Caco-2 (cell line): ENCODE measurements at regions of chr2 and their contacts with region 1.

Region 1: DNA sequence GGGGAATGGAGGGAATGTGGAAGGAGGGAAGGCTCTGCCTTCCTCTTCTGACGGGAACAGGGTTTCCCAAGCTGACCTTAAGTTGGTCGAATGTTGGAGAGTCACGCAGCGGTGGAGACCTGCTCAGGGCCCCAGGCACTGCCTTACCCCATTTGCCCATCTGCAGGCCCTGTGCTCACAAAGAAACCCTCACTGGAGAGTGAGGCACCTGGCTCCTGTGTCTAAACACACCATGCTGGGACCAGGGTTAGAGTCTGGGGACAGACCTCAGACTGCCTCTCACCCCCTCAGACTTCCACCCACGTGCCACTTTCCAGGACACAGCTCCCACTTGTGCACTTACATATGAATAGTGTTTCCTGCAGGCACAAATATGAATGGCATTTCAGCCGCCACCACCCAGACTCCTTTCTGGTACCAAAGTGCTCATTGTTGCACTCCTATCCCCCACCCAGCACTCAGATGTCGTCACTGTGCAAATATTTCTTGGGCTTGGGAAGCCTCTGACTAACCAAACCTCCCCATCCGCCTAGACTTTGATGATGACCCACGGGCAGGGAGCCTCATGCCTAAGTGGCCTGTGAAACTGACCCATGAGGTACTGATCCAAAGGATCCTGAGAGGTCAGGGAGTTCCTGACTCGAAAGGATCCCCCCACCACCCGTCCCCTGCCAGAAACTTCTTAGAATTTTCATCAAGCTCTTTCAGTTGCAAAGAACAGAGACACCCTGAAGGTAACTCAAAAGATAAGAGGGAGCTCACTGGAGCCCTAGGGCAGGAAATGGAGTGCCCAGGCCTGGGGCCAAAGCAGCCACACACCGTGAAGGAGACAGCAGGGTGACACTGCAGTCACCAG is 78.3 kb downstream of the STPG4 start:
- DNase-seq: peak; percentile 91 to 95
- H3K4me3 ChIP-seq: no peak overlapping the region
- H3K4me3 Mint-ChIP-seq: peak overlapping the region; percentile 52
- H3K27ac Mint-ChIP-seq: peak overlapping the region; percentile 89
- H3K4me1 ChIP-seq: peaks cover 58% of the 10 kb centered on the region
- H3K4me1 Mint-ChIP-seq: peaks cover 73% of the 10 kb centered on the region
- H3K27me3 ChIP-seq: no peaks in the 10 kb centered on the region
- H3K27me3 Mint-ChIP-seq: no peaks in the 10 kb centered on the region
- CTCF ChIP-seq: peak in 1 of 2 experiments; percentile 13

Region 2: GRCh38 chr2:47088668-47089462 is 12.1 kb after region 1 on chr2:
- CTCF ChIA-PET with region 1: interaction called, 19 read pairs
- POLR2A ChIA-PET with region 1: interaction called, 10 read pairs
- intact Hi-C with region 1: no loop called
- DNase-seq: peak; percentile 63 to 82
- H3K4me3 ChIP-seq: no peak overlapping the region
- H3K4me3 Mint-ChIP-seq: no peak overlapping the region
- H3K27ac Mint-ChIP-seq: peak overlapping the region; percentile 63
- H3K4me1 ChIP-seq: peaks cover 35% of the 10 kb centered on the region
- H3K4me1 Mint-ChIP-seq: peaks cover 43% of the 10 kb centered on the region
- H3K27me3 ChIP-seq: no peaks in the 10 kb centered on the region
- H3K27me3 Mint-ChIP-seq: no peaks in the 10 kb centered on the region
- CTCF ChIP-seq: no peak

Region 3: DNA sequence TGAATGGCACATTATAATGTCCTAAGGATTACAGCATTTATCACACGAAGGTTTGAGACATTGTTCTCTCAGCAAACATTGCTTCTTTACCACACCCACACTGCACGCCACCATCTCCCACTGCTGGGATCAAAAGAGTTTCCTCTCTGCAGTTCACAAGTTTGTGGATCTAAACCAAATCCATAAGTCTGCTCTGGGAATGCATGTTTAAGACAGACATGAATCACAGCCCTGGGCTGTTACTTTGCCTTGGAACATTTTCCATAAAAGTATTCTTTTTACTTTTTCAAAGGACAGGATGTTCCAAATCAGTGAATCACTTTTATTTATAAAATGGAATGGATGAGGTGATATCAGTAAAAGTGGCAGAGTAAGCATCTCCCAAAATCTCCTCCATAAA is 42.2 kb after region 1 on chr2:
- CTCF ChIA-PET with region 1: interaction called, 5 read pairs
- POLR2A ChIA-PET with region 1: no interaction called
- intact Hi-C with region 1: loop called (anchors 5 kb)
- DNase-seq: no peak
- H3K4me3 ChIP-seq: no peak overlapping the region
- H3K4me3 Mint-ChIP-seq: no peak overlapping the region
- H3K27ac Mint-ChIP-seq: no peak overlapping the region
- H3K4me1 ChIP-seq: peaks cover 17% of the 10 kb centered on the region
- H3K4me1 Mint-ChIP-seq: peaks cover 19% of the 10 kb centered on the region
- H3K27me3 ChIP-seq: no peaks in the 10 kb centered on the region
- H3K27me3 Mint-ChIP-seq: no peaks in the 10 kb centered on the region
- CTCF ChIP-seq: no peak

Region 4: GRCh38 chr2:47205576-47206141 is 128.8 kb after region 1 on chr2:
- CTCF ChIA-PET with region 1: no interaction called
- POLR2A ChIA-PET with region 1: no interaction called
- intact Hi-C with region 1: no loop called
- DNase-seq: no peak
- H3K4me3 ChIP-seq: no peak overlapping the region
- H3K4me3 Mint-ChIP-seq: no peak overlapping the region
- H3K27ac Mint-ChIP-seq: no peak overlapping the region
- H3K4me1 ChIP-seq: peaks cover 17% of the 10 kb centered on the region
- H3K4me1 Mint-ChIP-seq: peaks cover 28% of the 10 kb centered on the region
- H3K27me3 ChIP-seq: no peaks in the 10 kb centered on the region
- H3K27me3 Mint-ChIP-seq: no peaks in the 10 kb centered on the region
- CTCF ChIP-seq: no peak